PC-9 (cell line): ENCODE measurements at regions of chr6 and their contacts with region 1.

Region 1: DNA sequence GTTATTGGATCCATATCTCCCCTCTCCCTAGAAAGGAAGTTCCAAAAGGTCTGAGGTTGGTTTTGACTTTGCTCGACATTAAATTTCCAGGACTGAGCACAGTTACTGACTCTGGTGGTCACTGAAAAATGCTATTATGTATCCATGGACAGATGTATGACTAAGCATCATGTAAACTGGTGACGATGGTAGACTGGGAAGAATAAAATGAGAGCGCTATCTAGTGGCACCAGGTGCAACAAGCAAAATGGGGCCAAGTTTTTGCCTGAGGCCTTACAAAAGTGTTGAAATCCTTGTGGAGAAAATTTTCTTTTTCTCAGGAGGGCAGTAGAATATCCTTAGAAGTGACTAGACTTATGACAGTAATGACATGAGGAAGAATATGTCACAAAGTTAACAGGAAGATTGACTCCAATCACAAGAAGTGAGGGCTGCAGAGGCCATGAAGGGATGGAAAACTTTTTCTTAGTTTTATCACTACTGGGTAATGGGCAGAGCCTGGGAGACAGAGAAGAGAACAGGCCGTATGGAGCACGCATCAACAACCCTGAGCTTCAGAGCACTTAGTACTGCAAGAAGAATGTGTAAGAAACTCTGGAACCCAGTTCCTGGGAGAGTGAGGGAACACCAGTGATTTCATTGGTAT is 88.9 kb upstream of the ELOVL5 start:
- DNase-seq: peak; percentile 45 to 71
- H3K4me3 ChIP-seq: no peak overlapping the region
- H3K27ac ChIP-seq: no peak overlapping the region
- H3K4me1 ChIP-seq: peaks cover 15% of the 10 kb centered on the region
- H3K27me3 ChIP-seq: no peaks in the 10 kb centered on the region
- CTCF ChIP-seq: peak; percentile 72

Region 2: DNA sequence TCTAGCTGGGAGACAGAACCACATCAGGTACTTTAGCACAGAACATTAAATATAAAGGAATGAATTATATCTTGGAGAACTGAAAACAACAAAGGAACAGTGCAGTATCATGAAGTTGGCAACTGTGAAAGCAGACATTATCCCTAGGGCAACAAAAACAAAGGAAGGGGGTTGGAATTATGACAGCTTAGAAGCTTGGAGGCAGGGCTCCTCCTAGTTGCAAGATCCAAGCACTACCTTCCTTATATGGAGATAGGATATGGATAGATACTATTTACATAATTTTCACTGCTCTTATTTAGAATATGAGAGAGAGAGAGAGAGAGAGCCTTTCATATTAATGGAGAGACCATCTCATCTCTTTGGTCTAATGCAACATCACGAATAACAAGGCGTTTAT is 739.8 kb before region 1 on chr6:
- CTCF ChIA-PET with region 1: no interaction called
- POLR2A ChIA-PET with region 1: no interaction called
- intact Hi-C with region 1: no loop called
- DNase-seq: no peak
- H3K4me3 ChIP-seq: no peak overlapping the region
- H3K27ac ChIP-seq: no peak overlapping the region
- H3K4me1 ChIP-seq: no peaks in the 10 kb centered on the region
- H3K27me3 ChIP-seq: no peaks in the 10 kb centered on the region
- CTCF ChIP-seq: no peak

Region 3: DNA sequence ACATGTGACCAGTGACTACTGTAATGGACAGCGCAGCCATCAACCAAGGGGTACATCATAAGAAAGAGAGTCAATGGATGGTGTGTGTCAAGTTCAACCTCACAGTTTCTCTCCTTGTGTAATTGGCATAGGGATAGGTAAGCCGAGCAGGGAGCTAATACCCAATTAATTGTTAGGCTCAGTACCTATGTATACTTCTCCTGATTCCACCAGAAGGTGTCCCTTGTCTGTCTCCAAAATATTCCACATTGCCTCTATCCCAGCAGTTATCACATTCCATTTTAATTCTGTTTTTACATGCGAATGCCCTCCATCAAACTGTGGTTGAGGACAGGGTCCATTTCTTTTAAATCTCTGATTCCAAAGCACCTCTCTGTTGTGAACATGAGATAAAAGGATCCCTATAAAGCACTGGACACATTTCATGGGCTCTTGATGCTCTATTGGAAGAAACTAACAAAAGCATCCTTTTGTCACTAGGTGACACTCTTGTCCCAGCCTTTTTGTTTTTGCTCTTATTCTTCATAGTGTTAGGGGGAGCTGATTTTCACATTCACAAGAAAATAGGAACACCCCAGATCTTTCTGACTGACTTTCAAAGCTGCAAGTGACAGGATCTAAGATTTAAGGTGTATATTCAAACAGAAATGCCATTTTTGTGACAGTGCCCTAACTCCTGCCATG is 333.5 kb before region 1 on chr6:
- CTCF ChIA-PET with region 1: no interaction called
- POLR2A ChIA-PET with region 1: no interaction called
- intact Hi-C with region 1: loop called (anchors 1 kb)
- DNase-seq: peak; percentile 21 to 42
- H3K4me3 ChIP-seq: no peak overlapping the region
- H3K27ac ChIP-seq: no peak overlapping the region
- H3K4me1 ChIP-seq: peaks cover 12% of the 10 kb centered on the region
- H3K27me3 ChIP-seq: no peaks in the 10 kb centered on the region
- CTCF ChIP-seq: peak; percentile 69

Region 4: DNA sequence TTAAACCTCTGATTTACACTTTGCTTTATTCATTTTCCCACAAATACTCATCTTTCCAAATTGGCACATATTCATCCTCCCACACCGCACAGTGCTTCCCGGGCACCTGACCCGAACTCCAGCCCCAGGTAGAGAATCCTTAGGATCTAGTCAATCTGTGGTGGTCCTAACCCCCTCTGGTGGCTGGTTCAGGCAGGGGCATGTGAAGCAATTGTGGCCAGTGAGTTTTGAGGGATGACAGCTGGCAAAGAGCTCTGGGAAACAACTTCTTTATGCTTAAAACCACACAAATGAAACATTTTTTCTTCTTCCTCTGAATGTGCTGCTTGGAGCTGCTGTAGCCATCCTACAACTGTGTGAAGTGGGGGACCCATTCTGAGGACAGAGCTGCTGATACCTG is 143.6 kb before region 1 on chr6:
- CTCF ChIA-PET with region 1: no interaction called
- POLR2A ChIA-PET with region 1: no interaction called
- intact Hi-C with region 1: loop called (anchors 5 kb)
- DNase-seq: no peak
- H3K4me3 ChIP-seq: no peak overlapping the region
- H3K27ac ChIP-seq: no peak overlapping the region
- H3K4me1 ChIP-seq: peaks cover 7% of the 10 kb centered on the region; the same call in 1 of the 2 replicates
- H3K27me3 ChIP-seq: no peaks in the 10 kb centered on the region
- CTCF ChIP-seq: peak; percentile 60

Region 5: DNA sequence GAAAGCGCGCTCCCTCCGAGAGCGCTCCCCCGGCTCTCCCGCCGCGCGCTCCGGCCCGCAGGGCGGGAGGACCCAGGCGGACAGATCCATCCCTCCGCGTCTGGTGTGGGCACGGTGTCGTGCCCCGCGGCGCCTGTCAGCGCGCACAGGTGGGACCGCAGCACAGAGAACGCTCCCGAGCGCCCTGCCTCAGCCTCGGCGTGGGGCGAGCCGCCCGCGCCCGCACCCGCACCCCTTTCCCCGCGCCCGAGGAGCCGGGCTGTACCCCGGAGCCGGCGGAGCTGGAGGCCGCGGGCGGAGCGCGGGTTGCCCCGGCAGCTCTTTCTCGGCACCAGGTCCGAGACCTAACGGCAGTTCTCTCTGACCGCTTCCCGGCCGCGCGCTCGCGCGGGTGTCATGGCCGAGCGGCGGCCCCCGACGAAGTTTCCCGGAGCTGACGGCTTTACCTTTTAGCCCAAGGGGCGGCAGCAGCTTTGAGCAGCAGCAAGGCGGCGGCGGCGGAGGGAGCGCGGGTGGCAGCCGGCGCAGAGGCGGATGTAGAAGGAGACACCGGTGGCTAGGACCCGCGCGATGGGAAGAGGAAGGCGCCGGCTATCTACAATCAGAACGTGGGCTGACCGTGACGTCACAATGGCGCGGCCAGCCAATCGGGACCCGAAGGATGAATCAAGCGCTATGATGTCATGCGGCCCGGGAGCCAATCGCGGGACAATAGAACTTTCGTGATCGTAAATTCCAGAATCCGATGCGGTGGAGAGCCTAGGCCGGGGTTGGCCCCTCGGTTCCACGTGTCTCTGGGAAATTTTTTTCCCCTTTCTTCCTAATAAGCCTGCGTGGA is 89.1 kb before region 1 on chr6 and contains the start of gene ELOVL5:
- CTCF ChIA-PET with region 1: no interaction called
- POLR2A ChIA-PET with region 1: no interaction called
- intact Hi-C with region 1: loop called (anchors 2 kb)
- DNase-seq: peak; percentile 81 to 93
- H3K4me3 ChIP-seq: peak within 1 kb of the TSS; percentile 73
- H3K27ac ChIP-seq: peak within 1 kb of the TSS; percentile 54
- H3K4me1 ChIP-seq: peaks cover 20% of the 10 kb centered on the region
- H3K27me3 ChIP-seq: no peaks in the 10 kb centered on the region
- CTCF ChIP-seq: no peak
- total RNA-seq, gene ELOVL5: 71.3 and 108 TPM in 2 replicates

Region 6: DNA sequence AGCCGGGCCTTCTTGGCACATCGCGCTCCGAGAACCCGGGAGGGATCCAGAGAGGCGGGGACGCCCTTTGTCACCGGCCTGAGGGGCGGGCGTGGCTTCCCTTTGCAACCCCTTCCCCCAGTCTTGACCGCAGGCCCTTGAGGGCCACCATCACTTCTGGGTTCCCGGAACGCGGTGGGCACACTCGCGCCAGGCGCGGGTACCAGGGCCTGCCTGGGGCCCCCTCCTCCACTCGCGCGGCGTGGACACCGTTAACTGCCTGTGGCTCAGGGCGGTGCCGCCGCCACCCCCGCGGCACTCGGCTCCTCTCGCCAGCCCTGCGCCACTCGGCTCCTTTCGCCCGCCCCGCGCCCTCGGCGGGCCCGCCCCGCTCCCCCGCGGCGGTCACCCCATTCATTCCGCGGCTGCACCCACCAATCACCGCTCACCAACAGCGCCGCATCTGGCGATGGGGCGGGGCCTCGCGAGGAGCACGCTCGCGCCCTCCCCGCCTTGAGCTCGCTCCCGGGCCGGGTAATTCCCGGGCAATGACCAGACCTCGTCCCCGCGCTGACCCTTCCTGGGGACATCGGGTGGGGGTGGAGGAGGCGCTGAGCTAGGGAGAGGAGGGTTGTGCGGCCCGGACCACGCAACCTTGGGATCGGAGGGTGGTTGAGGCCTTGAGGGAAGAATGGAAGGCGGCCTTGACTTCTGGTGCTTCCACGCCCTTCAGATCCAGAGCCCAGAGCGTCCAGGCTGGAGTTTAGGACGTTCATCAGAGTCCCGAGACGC is 78.4 kb before region 1 on chr6:
- CTCF ChIA-PET with region 1: no interaction called
- POLR2A ChIA-PET with region 1: no interaction called
- intact Hi-C with region 1: loop called (anchors 1 kb)
- DNase-seq: peak; percentile 88 to 97
- H3K4me3 ChIP-seq: peak overlapping the region; percentile 61
- H3K27ac ChIP-seq: peak overlapping the region; percentile 84
- H3K4me1 ChIP-seq: peaks cover 36% of the 10 kb centered on the region
- H3K27me3 ChIP-seq: no peaks in the 10 kb centered on the region
- CTCF ChIP-seq: no peak

Region 7: GRCh38 chr6:53484476-53485280 is 47.0 kb after region 1 on chr6:
- CTCF ChIA-PET with region 1: interaction called, 3 read pairs
- POLR2A ChIA-PET with region 1: no interaction called
- intact Hi-C with region 1: loop called (anchors 1 kb)
- DNase-seq: peak in 1 of 2 experiments; percentile 42
- H3K4me3 ChIP-seq: no peak overlapping the region
- H3K27ac ChIP-seq: no peak overlapping the region
- H3K4me1 ChIP-seq: no peaks in the 10 kb centered on the region
- H3K27me3 ChIP-seq: no peaks in the 10 kb centered on the region
- CTCF ChIP-seq: peak; percentile 98